HEK293T (cell line): ENCODE measurements at regions of chr16 and their contacts with region 1.

Region 1: GRCh38 chr16:67428146-67428731 is 2.7 kb upstream of the HSD11B2 start:
- DNase-seq: peak; percentile 83

Region 2: DNA sequence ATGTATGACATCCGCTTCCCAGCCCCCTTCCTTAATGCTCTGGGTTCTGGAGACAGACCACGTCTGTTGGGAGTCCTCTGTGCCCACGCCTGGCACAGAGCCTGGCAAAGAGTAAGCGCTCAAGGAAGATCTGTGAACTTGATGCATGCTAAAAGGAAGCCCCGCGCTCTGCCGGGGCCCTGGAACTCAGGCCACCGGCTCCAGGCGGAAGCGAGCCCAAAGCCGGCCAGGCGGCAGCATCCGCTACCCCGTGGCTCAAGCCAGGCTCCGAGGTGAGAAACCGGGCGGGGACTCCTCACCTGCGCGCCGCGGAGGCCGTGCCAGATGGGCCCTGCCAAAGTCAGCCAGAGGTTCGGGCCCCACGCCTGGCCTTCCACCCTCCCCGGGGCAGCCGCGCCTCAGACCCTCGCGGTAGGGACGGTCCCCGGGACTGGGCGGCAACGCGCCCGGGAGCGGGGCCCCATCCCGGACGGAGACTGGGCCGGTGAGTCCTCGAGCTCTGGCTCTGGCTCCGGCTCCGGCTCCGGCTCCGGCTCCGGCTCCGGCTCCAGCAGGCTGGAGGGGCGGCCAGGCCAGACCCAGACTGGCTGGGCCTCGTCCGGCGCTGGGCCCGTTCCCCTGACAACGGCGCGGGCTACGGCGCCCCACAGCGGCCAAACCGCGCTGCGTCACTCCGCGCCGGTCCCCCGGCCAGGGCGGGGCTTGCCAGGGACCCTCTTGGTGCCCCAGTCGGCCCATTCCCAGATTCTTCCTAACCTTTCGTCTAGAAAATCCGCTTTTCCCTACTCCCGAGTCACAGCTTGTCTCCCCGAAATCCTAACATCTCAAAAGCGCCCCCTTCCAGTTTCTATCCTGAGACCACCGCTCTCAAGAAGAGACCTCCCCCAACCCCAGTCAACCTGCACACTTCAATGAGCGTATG is 12.1 kb before region 1 on chr16 and contains the start of gene ZDHHC1:
- CTCF ChIA-PET with region 1: interaction called, 25 read pairs
- POLR2A ChIA-PET with region 1: interaction called, 3 read pairs
- DNase-seq: peak; percentile 86

Region 3: DNA sequence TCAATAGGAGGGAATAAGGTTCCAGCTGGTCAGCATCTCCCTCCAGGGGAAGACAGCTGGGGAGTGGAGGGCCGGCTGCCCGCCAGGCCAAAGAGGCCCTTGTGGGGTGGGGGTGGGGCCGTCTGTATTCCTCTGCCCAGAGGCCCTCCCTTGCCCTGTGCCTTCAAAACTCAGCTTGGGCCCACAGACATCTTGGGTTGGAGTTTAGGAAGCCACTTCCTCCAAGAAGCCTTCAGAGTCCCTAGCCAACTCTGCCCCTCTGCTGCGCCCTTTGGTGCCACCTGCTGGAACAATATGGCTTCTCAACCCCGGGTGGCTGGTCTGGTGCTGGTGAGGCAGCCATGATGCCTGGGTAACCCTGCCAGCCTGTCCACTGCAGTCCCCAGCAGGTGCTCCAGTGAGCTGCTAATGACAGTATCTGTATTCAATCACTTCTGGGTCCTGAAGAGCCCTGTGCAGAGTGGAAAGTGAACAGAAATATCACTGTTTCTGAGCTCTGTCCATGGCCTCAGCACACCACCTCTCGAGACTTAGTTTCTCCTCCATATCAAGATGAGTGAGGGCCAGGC is 19.4 kb after region 1 on chr16:
- CTCF ChIA-PET with region 1: interaction called, 11 read pairs
- POLR2A ChIA-PET with region 1: no interaction called
- DNase-seq: peak; percentile 67

Region 4: GRCh38 chr16:67461600-67462592 is 33.7 kb after region 1 on chr16:
- CTCF ChIA-PET with region 1: interaction called, 50 read pairs
- POLR2A ChIA-PET with region 1: interaction called, 3 read pairs
- DNase-seq: no peak